ENCODE measurements at regions of chr5 and their contacts with region 1.

Region 1: DNA sequence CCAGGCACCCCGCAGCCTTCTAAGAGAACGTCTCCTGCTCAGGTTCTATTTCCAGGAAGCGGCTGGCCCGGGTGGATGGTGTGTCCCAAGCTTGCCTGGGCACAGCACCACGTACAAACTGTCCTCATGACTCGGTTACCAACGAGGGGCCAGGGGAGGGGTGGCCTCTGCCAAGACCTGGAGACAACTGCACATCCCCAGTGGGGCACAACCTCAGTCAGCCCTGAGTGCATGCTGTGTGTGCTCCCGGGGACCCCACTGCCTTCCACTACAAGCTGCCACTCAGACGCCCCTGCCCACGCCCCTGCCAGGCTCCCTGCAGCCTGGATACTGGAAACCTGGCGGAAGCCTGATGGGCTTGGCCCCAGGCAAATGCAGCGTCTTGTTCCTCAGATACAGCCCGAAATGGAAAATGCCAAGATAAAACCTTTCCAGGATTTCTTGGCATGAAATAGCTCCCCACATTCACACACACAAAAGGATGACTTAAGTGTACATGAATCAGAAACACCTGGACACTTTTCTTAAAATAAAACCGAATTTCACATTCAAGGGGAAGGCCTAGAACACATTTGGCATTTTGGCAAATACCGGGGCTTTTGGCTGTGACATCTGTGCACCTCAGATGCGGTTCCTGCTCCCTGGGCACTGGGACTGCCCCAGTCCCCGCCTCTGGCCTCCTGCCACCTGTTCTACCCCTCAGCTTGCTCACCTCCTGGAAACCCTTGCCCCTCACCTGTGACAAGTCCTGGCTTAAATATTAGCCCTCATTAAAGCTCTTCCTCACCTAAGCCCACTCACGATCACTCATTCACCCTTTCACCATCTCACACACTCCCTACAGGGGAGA is 62.5 kb downstream of the COL23A1 start:
- DNase-seq: no peak
- ATAC-seq: no peak
- H3K4me3 ChIP-seq: no peak overlapping the region
- H3K4me3 Mint-ChIP-seq: no peak overlapping the region
- H3K27ac ChIP-seq: no peak overlapping the region
- H3K27ac Mint-ChIP-seq: no peak overlapping the region
- H3K4me1 ChIP-seq: no peaks in the 10 kb centered on the region
- H3K4me1 Mint-ChIP-seq: no peaks in the 10 kb centered on the region
- H3K27me3 ChIP-seq: peaks cover 0 to 10% of the 10 kb centered on the region in 2 experiments
- H3K27me3 Mint-ChIP-seq: peaks cover 0 to 1% of the 10 kb centered on the region in 2 donors

Region 2: DNA sequence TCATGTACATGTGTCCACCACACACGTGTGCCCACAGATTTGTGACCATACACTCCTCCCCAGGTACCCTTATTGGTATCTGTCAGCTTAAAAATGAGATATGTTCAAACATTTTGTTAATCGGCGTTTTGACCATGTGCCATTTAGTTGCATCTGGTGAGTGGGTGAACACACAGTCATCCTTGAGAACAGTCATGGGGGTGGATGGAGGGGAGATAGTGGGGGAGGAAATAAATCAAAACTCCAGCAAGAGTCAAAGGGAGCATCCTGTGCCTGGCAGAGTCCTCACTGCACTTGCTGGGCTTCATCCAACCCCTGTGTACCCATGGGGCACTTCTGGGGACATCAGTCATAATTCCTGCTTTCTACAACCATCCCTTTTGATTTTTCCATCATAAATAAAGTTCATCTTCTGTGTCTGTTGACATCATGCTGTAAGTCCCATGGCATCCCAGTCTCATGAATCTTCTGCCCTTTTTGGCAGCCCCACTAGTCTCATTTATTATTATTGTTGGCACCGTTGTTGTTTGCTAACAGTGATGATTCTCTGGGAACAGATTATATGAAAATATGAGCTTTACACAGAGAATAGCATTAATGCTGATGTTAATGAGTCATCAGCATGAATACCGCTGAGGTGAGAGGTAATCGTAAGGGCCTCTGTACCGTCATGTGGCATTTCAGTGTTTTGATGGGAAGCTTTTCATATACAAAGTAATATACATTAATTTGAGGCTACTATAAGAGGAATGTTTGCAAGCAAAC is 123.5 kb after region 1 on chr5:
- CTCF ChIA-PET with region 1: interaction called in 1 of 2 experiments, 10 read pairs
- POLR2A ChIA-PET with region 1: no interaction called
- DNase-seq: no peak
- ATAC-seq: no peak
- H3K4me3 ChIP-seq: no peak overlapping the region
- H3K4me3 Mint-ChIP-seq: no peak overlapping the region
- H3K27ac ChIP-seq: no peak overlapping the region
- H3K27ac Mint-ChIP-seq: no peak overlapping the region
- H3K4me1 ChIP-seq: no peaks in the 10 kb centered on the region
- H3K4me1 Mint-ChIP-seq: no peaks in the 10 kb centered on the region
- H3K27me3 ChIP-seq: peaks cover 0 to 8% of the 10 kb centered on the region in 2 experiments
- H3K27me3 Mint-ChIP-seq: peaks cover under 1 to 7% of the 10 kb centered on the region in 2 donors